ENCODE measurements at regions of chr17 and their contacts with region 1.

Region 1: GRCh38 chr17:59753522-59754467 is 46.3 kb downstream of the VMP1 start:
- DNase-seq: peak; percentile 83
- H3K4me3 ChIP-seq: peak overlapping the region in 2 of 3 experiments; percentile 16 to 42
- H3K27ac ChIP-seq: peak overlapping the region; percentile 99
- H3K4me1 ChIP-seq: peaks cover 33% of the 10 kb centered on the region
- H3K27me3 ChIP-seq: no peaks in the 10 kb centered on the region
- CTCF ChIP-seq: peak; percentile 60 to 69

Region 2: DNA sequence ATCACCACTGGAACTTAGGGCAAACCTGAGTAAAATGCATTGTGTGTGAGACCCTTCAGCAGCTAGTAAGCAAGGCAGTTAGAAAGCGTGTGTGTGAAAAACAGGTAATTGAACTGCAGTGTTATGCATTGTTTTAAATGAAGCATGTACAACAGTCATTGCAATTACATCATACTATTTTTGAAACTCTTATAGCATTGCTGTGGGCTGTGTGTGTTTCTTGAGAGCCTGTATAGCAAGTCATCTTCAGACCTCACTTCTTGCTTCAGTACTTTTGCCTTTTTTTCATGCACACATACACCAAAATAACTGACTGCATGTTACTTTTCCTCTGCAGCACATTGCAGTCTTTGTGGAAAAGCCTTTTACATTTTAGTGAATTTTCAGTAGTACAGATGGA is 65.8 kb before region 1 on chr17:
- CTCF ChIA-PET with region 1: no interaction called
- dilution Hi-C with region 1: no loop called
- in situ Hi-C with region 1: no loop called
- intact Hi-C with region 1: no loop called
- DNase-seq: no peak
- H3K4me3 ChIP-seq: no peak overlapping the region
- H3K27ac ChIP-seq: no peak overlapping the region
- H3K4me1 ChIP-seq: no peaks in the 10 kb centered on the region
- H3K27me3 ChIP-seq: no peaks in the 10 kb centered on the region
- CTCF ChIP-seq: no peak

Region 3: DNA sequence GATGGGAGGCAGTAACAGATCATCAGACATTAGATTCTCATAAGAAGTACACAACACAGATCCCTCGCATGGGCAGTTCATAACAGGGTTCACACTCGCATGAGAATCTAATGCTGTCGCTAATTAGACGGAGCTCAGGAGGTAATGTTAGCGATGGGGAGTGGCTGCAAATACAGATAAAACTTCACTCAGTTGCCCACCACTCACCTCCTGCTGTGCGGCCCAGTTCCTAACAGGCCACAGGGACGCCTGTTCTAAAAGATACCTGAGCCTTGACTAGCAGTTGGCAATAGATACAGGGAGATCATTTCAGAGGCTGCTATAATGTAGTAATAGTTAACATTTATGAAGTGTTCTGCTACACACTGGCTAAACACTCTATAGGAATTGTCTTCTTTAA is 51.5 kb before region 1 on chr17:
- CTCF ChIA-PET with region 1: no interaction called
- dilution Hi-C with region 1: no loop called
- in situ Hi-C with region 1: no loop called
- intact Hi-C with region 1: no loop called
- DNase-seq: no peak
- H3K4me3 ChIP-seq: no peak overlapping the region
- H3K27ac ChIP-seq: no peak overlapping the region
- H3K4me1 ChIP-seq: peaks cover 9% of the 10 kb centered on the region
- H3K27me3 ChIP-seq: no peaks in the 10 kb centered on the region
- CTCF ChIP-seq: no peak

Region 4: GRCh38 chr17:59786536-59787319 is 32.9 kb after region 1 on chr17:
- CTCF ChIA-PET with region 1: interaction called, 3 read pairs
- dilution Hi-C with region 1: no loop called
- in situ Hi-C with region 1: no loop called
- intact Hi-C with region 1: loop called (anchors 5 kb)
- DNase-seq: peak; percentile 100
- H3K4me3 ChIP-seq: peak overlapping the region in 1 of 3 experiments; percentile 0
- H3K27ac ChIP-seq: peak overlapping the region; percentile 99
- H3K4me1 ChIP-seq: peaks cover 37% of the 10 kb centered on the region
- H3K27me3 ChIP-seq: no peaks in the 10 kb centered on the region
- CTCF ChIP-seq: peak in 1 of 2 donors; percentile 13

Region 5: GRCh38 chr17:59837308-59838051 is 83.7 kb after region 1 on chr17:
- CTCF ChIA-PET with region 1: interaction called, 18 read pairs
- dilution Hi-C with region 1: no loop called
- in situ Hi-C with region 1: no loop called
- intact Hi-C with region 1: loop called (anchors 1 kb)
- DNase-seq: peak; percentile 100
- H3K4me3 ChIP-seq: peak overlapping the region; percentile 92 to 95 (median 95)
- H3K27ac ChIP-seq: peak overlapping the region; percentile 100
- H3K4me1 ChIP-seq: peaks cover 14% of the 10 kb centered on the region
- H3K27me3 ChIP-seq: no peaks in the 10 kb centered on the region
- CTCF ChIP-seq: no peak

Region 6: GRCh38 chr17:59846394-59847165 is 92.8 kb after region 1 on chr17:
- CTCF ChIA-PET with region 1: no interaction called
- dilution Hi-C with region 1: no loop called
- in situ Hi-C with region 1: loop called in 1 of 2 experiments (anchors 5 kb)
- intact Hi-C with region 1: loop called (anchors 1 kb)
- DNase-seq: peak; percentile 95
- H3K4me3 ChIP-seq: peak overlapping the region in 1 of 3 experiments; percentile 11
- H3K27ac ChIP-seq: peak overlapping the region; percentile 100
- H3K4me1 ChIP-seq: peaks cover 36% of the 10 kb centered on the region
- H3K27me3 ChIP-seq: no peaks in the 10 kb centered on the region
- CTCF ChIP-seq: no peak

Region 7: GRCh38 chr17:59853168-59853918 is 99.5 kb after region 1 on chr17:
- CTCF ChIA-PET with region 1: interaction called, 11 read pairs
- dilution Hi-C with region 1: no loop called
- in situ Hi-C with region 1: loop called in 1 of 2 experiments (anchors 5 kb)
- intact Hi-C with region 1: loop called (anchors 1 kb)
- DNase-seq: peak; percentile 98
- H3K4me3 ChIP-seq: no peak overlapping the region
- H3K27ac ChIP-seq: peak overlapping the region; percentile 64
- H3K4me1 ChIP-seq: peaks cover 25% of the 10 kb centered on the region
- H3K27me3 ChIP-seq: no peaks in the 10 kb centered on the region
- CTCF ChIP-seq: peak; percentile 69 to 73

Region 8: DNA sequence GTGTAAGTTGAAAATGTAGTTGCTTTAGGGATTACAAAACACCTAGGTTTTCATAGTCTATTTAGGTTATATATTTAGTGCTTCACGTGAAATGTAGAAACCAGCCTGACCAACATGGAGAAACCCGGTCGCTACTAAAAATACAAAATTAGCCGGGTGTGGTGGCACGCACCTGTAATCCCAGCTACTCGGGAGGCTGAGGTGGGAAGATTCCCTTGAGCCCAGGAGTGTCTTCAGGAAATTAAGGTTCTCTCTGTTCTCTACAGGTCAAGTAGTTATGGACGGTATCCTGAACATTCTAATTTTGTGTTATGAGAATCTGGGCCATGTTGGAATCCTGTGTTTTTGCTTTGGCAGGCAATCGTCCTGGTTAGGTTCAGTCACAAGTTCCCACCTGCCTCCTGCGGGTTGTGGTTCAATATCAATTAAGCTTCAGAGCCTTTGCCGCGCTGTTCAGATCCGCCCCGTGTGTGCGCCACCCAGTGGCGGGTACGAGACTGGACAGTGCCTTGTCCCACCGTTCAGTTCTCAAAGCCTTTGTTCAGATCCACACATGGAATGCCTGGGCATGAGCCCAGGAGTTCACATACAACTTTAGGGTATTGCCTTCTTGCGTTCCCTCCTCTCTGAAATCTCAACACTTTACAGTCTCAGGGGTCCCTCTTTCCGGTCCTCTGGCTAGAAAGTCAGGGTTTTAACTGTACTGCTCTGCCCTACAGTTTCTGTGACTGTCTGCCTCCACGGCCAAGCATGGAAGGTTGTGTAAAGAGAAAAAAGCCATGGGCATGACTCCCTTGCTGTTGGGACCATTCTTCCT is 283.2 kb after region 1 on chr17:
- CTCF ChIA-PET with region 1: no interaction called
- dilution Hi-C with region 1: loop called (anchors 25 kb)
- in situ Hi-C with region 1: loop called in 1 of 2 experiments (anchors 25 kb)
- intact Hi-C with region 1: loop called (anchors 5 kb)
- DNase-seq: peak; percentile 75
- H3K4me3 ChIP-seq: no peak overlapping the region
- H3K27ac ChIP-seq: no peak overlapping the region
- H3K4me1 ChIP-seq: no peaks in the 10 kb centered on the region
- H3K27me3 ChIP-seq: no peaks in the 10 kb centered on the region
- CTCF ChIP-seq: peak; percentile 96 to 98

Region 9: GRCh38 chr17:61524313-61524712 is 1770.5 kb after region 1 on chr17:
- CTCF ChIA-PET with region 1: no interaction called
- dilution Hi-C with region 1: no loop called
- in situ Hi-C with region 1: no loop called
- intact Hi-C with region 1: no loop called
- DNase-seq: no peak
- H3K4me3 ChIP-seq: no peak overlapping the region
- H3K27ac ChIP-seq: no peak overlapping the region
- H3K4me1 ChIP-seq: no peaks in the 10 kb centered on the region
- H3K27me3 ChIP-seq: peaks cover 2% of the 10 kb centered on the region
- CTCF ChIP-seq: no peak